Psoas muscle (tissue), 8 donors: ENCODE measurements at regions of chr18 and their contacts with region 1.

Region 1: GRCh38 chr18:58263055-58263957 is 219.3 kb downstream of the NEDD4L start:
- DNase-seq: no peak
- ATAC-seq: peak in 3 of 4 donors; percentile 19 to 59 (median 48)
- H3K4me3 ChIP-seq: peak overlapping the region; percentile 42
- H3K27ac ChIP-seq: peak overlapping the region; percentile 65
- H3K4me1 ChIP-seq: peaks cover 53% of the 10 kb centered on the region
- H3K27me3 ChIP-seq: no peaks in the 10 kb centered on the region
- CTCF ChIP-seq: no peak

Region 2: DNA sequence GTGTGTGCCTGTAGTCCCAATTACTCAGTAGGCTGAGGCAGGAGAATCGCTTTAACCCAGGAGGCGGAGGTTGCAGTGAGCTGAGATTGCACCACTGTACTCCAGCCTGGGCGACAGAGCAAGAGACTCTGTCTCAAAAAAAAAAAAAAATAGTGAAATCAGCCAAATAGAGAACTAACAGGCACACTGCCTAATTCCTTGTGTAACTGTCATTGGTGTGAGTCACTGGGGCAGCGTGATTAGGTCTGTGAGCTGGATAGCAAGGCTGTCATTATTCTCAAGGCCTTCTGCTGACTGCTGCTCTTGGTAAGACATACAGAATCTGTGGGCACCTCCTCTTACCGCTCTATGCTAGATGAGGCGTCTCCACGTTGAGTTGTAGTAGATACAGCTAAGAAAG is 51.0 kb after region 1 on chr18:
- intact Hi-C with region 1: loop called in 1 of 2 experiments (anchors 5 kb)
- DNase-seq: peak; percentile 53 to 71
- ATAC-seq: peak; percentile 66 to 79 (median 76)
- H3K4me3 ChIP-seq: no peak overlapping the region
- H3K27ac ChIP-seq: peak overlapping the region; percentile 27
- H3K4me1 ChIP-seq: peaks cover 62% of the 10 kb centered on the region
- H3K27me3 ChIP-seq: no peaks in the 10 kb centered on the region
- CTCF ChIP-seq: no peak

Region 3: GRCh38 chr18:58325494-58325893 is 62.2 kb after region 1 on chr18:
- intact Hi-C with region 1: no loop called
- DNase-seq: no peak
- ATAC-seq: no peak
- H3K4me3 ChIP-seq: no peak overlapping the region
- H3K27ac ChIP-seq: no peak overlapping the region
- H3K4me1 ChIP-seq: peaks cover 12% of the 10 kb centered on the region
- H3K27me3 ChIP-seq: no peaks in the 10 kb centered on the region
- CTCF ChIP-seq: no peak